ENCODE measurements at regions of chr12 and their contacts with region 1.

Region 1: DNA sequence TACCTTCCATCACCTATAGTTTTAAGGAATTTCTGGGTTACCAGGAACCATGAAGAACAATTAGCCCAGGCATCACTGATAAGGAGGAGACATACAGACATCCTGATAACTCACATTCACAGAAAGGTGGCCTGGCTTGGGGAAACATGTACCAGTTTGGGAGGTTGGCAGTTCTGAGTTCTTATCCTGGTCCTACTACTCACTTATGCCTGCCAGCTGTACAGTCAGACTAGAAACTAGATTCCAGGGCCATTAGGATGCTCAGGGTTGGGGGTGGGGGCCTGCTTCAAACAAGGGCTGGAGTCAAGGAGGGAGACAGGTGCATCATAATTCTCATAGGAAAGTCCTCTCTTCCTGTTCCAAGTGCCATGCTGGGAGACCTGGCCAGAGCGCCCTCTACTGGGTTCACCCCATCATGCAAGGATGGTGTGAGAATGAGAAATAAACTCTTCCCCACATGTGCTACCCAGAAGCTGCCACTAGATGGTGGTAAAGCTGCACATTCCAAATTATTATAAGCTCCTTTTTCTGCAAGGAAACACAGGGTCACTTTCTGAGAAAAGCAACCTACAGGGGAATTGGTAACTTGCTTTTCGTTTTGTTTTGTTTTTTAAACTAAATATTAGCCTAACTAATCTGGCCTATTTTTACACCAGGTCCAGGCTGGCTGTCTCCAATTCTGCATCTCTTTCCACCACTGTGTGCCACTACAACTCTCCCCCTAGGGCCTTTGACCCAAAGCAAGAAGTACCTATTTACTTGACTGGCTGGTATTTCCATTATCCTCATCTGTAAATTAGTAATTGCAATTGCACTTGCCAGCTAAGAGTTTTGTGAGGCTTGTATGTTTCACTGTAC is 14.5 kb downstream of the OAS2 start:
- DNase-seq: peak; percentile 23
- H3K4me3 ChIP-seq: no peak overlapping the region
- H3K27ac ChIP-seq: no peak overlapping the region
- H3K27me3 ChIP-seq: peaks cover 5% of the 10 kb centered on the region
- CTCF ChIP-seq: peak; percentile 87

Region 2: GRCh38 chr12:112978163-112979040 is 14.4 kb before region 1 on chr12 and contains the start of gene OAS2:
- CTCF ChIA-PET with region 1: interaction called, 23 read pairs
- POLR2A ChIA-PET with region 1: no interaction called
- DNase-seq: no peak
- H3K4me3 ChIP-seq: no peak within 1 kb of the TSS
- H3K27ac ChIP-seq: peak within 1 kb of the TSS; percentile 31
- H3K27me3 ChIP-seq: no peaks in the 10 kb centered on the region
- CTCF ChIP-seq: no peak
- polyA plus RNA-seq, gene OAS2: 0.12 and 0.21 TPM in 2 replicates

Region 3: GRCh38 chr12:113005754-113006153 is 13.0 kb after region 1 on chr12:
- CTCF ChIA-PET with region 1: interaction called, 13 read pairs
- POLR2A ChIA-PET with region 1: no interaction called
- DNase-seq: no peak
- H3K4me3 ChIP-seq: no peak overlapping the region
- H3K27ac ChIP-seq: no peak overlapping the region
- H3K27me3 ChIP-seq: peaks cover 6% of the 10 kb centered on the region
- CTCF ChIP-seq: peak; percentile 25; the same call in 1 of the 2 replicates

Region 4: DNA sequence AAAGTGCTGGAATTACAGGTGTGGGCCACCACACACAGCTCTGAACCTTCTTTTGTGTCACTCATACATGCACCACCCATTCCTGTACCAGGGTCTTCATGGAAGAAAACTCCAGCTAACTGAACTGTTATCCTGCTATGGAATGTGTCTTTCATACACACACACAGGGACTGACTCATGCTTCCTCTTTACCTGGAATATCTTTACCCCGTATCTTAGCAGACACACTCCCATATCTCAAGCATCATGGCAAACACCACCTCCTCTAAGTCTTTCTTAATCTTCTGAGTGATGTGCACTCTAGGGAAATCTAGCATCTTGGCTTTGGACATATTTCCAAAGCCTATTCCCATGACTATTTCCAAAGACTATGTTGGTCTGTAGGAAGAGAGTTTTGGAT is 28.7 kb after region 1 on chr12:
- CTCF ChIA-PET with region 1: interaction called, 12 read pairs
- POLR2A ChIA-PET with region 1: no interaction called
- DNase-seq: no peak
- H3K4me3 ChIP-seq: no peak overlapping the region
- H3K27ac ChIP-seq: no peak overlapping the region
- H3K27me3 ChIP-seq: no peaks in the 10 kb centered on the region
- CTCF ChIP-seq: no peak

Region 5: DNA sequence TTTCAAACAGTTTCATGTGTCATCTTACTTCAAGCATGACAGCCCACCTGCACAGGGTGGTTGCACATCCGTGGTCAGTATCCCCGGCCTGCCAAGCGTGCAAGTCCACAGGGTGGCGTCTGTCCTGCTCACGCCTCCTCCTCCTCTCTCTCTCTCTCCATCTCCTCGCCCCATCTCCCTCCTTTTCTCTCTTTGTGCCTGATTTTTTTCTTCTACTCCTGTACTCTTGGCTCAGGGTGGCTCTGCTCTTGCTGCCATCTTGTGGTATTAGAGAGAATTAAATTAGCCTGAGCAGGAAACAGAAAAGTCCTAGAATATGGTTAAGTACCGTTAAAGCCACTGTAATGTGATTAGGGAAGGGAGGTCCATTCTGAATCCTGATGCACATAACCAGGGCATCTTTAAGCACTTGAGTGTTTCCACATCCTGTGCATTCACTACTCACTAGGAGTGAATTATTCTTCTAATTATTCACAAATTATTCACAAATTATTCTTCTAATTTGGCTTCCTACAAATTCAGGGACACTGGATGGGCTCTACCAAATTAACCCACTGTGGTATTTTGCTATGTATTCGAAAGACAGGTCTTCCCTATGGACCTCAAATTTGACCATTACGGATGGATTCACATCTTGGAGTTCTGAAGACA is 38.2 kb after region 1 on chr12:
- CTCF ChIA-PET with region 1: interaction called, 47 read pairs
- POLR2A ChIA-PET with region 1: no interaction called
- DNase-seq: no peak
- H3K4me3 ChIP-seq: no peak overlapping the region
- H3K27ac ChIP-seq: no peak overlapping the region
- H3K27me3 ChIP-seq: peaks cover 5% of the 10 kb centered on the region
- CTCF ChIP-seq: peak; percentile 76

Region 6: DNA sequence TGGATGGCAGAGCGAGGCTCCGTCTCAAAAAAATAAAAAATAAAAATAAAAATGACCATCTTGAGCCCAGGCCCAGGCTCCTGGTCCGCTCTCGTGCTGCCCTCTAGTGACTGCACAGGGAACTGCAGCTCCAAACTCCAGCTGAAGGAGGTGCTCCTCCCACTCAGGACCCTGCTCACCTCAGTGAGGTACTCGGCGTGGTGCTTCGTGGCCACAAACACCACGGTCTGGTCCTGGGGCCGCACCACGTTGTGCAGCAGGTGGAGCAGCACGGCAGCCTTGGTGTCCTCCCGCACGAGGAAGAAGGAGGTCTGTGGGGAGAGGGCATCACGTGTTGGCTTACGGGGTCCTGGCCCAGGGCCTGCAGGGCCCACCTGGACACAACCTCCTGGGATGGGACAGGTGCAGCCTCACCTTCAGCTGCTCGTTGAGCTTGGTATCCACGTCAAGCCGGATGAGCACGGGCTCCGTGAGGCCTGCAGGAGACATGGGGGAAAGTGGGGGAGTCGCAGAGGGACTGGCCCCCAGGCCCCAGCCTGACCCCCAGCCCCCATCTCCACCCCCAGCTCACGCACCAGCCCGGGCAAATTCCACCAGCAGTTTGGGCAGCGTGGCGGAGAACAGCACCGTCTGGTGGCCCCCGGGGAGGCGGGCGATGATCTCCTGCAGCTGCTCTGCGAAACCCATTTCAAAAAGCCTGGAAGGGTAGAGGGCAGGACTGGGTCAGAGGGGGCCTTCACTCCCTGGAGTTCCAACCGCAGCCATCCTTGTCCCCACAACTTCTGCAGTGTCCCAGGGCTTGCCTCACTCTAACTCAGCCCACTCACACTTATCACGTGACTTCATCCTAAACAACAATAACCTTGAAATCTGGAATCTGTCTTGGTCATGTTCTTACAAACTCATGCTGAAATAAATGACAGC is 182.0 kb after region 1 on chr12:
- CTCF ChIA-PET with region 1: interaction called, 23 read pairs
- POLR2A ChIA-PET with region 1: no interaction called
- DNase-seq: no peak
- H3K4me3 ChIP-seq: no peak overlapping the region
- H3K27ac ChIP-seq: no peak overlapping the region
- H3K27me3 ChIP-seq: no peaks in the 10 kb centered on the region
- CTCF ChIP-seq: peak; percentile 99

Measured in AG04450 (cell line).